PC-3 (cell line): ENCODE measurements at regions of chr13 and their contacts with region 1.

Region 1: GRCh38 chr13:73075546-73075945 is 16.7 kb downstream of the KLF5 start:
- DNase-seq: no peak
- ATAC-seq: no peak
- H3K4me3 ChIP-seq: no peak overlapping the region
- H3K27ac ChIP-seq: peak overlapping the region; percentile 21; the same call in 1 of the 2 replicates
- H3K4me1 ChIP-seq: peaks cover 29% of the 10 kb centered on the region
- H3K27me3 ChIP-seq: no peaks in the 10 kb centered on the region
- CTCF ChIP-seq: no peak

Region 2: DNA sequence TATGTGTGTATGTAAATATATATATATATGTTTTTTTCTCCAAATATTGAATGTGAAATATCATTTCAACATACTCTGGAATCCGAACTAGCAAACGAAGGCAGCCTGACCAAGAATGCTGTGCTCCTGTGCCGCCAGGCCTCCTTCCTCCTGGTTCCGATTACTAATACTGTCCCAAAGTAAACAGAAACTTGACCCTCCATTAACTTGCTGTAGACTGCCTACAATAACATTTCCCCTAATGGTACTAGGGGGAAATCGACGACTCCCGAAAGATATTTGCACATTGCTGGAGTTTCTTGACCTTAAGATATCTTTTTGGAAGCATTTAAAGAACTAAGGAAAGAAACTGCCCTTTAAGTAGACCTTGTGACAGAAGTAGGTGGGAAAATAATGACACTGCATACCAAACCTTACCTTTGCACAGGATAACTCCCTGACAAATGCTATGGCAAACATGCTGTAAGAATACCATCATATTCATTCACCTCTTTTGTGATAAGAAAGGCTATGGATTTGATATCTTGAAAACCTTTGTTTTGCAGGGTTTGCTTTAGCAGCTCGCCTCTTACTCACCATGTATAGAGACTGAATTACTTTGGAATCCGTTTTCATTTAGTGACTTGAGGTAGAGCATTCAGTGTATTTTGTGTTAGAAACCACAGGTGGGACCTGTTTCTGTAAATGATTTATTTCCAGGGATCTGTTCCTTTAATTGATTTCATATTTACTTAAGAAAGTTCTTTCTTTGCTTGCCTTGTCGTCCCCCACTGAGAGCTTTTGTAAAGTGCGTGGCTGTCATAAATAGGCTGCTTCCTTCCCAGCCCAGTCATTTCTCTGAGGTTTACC is 63.3 kb after region 1 on chr13:
- CTCF ChIA-PET with region 1: no interaction called
- POLR2A ChIA-PET with region 1: interaction called, 5 read pairs
- intact Hi-C with region 1: loop called (anchors 5 kb)
- DNase-seq: peak; percentile 83
- ATAC-seq: peak; percentile 90
- H3K4me3 ChIP-seq: peak overlapping the region; percentile 47; the same call in 1 of the 2 replicates
- H3K27ac ChIP-seq: peak overlapping the region; percentile 94
- H3K4me1 ChIP-seq: peaks cover 52% of the 10 kb centered on the region
- H3K27me3 ChIP-seq: no peaks in the 10 kb centered on the region
- CTCF ChIP-seq: no peak

Region 3: DNA sequence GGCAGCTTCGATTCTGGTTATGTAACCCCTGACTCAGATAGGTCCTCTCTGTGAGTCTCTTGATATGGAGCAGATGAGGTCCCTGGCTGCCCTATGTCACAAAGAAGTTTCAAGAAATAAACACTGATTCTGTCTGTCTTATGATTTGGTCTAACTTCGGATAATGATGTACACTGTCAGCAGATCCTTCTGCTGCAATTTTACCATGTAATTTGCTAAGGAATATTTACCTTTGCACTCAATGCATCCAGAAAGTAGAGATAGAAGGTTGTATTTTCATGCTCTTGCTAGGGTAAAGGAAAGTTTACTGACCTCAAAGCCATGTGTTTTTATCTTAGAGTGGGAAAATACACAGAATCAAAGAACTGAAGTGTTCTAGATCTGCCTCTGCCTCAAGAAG is 81.5 kb after region 1 on chr13:
- CTCF ChIA-PET with region 1: no interaction called
- POLR2A ChIA-PET with region 1: interaction called, 18 read pairs
- intact Hi-C with region 1: no loop called
- DNase-seq: no peak
- ATAC-seq: no peak
- H3K4me3 ChIP-seq: no peak overlapping the region
- H3K27ac ChIP-seq: no peak overlapping the region
- H3K4me1 ChIP-seq: no peaks in the 10 kb centered on the region
- H3K27me3 ChIP-seq: no peaks in the 10 kb centered on the region
- CTCF ChIP-seq: no peak

Region 4: DNA sequence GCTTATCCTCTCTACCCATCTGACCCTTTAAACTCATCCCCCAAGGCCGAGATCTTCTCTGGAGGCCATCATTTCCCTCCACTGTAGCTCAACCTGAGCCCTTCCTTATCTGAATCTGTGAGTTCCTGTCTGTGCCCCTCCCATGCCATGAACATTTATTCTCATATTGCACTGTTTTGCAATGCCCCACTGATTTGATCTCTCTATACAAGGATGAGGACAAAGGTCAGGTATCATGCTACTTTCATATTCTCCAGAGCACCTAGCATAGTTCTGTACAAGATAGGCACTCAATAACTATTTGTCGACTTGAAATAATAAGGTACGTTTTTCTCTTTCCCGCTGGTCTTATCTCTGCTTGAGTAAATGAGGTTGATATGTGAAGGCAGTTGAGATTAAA is 118.8 kb after region 1 on chr13:
- CTCF ChIA-PET with region 1: no interaction called
- POLR2A ChIA-PET with region 1: no interaction called
- intact Hi-C with region 1: no loop called
- DNase-seq: peak; percentile 7
- ATAC-seq: no peak; the same call in 1 of the 2 replicates
- H3K4me3 ChIP-seq: no peak overlapping the region
- H3K27ac ChIP-seq: peak overlapping the region; percentile 76
- H3K4me1 ChIP-seq: peaks cover 21% of the 10 kb centered on the region
- H3K27me3 ChIP-seq: no peaks in the 10 kb centered on the region
- CTCF ChIP-seq: no peak

Region 5: DNA sequence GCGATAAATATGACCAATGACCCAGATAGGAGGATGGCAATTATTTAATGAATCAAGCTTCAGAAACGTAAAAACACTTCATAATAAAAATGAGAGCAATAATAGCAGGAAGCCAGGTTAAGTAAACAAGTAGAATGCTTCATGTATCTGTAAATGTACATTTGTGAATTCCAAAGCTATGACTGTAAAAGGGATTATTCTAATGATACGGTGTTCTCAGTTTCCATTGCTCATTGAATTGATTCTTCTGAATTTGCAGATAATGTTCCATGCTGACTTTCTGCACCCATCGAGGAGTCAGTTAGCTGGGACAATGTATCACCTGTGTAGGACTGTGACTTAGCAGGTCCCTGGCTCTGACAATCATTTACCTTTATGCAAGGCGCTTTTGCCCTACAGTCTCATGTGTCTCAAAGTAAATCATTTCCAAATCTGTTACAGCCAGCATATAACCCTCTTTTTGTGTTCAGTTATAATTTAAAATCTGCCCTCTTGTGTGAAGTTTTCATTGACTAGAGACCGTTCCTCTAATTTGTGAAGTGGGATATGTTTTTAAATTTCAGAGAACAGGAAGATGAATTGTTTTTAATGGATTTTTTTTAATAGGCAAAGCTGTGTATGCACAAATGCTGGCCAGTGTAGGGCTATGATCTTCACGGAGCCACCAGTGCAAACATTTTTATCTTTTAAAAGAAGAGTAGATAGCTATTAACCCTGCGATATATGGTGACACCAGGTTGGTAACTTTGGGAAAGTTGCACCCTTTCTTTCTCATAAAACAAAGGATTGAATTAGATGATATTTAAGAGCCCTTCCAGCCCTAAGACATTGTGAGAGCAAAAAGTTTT is 250.4 kb after region 1 on chr13:
- CTCF ChIA-PET with region 1: no interaction called
- POLR2A ChIA-PET with region 1: no interaction called
- intact Hi-C with region 1: loop called (anchors 5 kb)
- DNase-seq: peak; percentile 81
- ATAC-seq: peak; percentile 81
- H3K4me3 ChIP-seq: peak overlapping the region; percentile 49
- H3K27ac ChIP-seq: peak overlapping the region; percentile 95
- H3K4me1 ChIP-seq: peaks cover 32% of the 10 kb centered on the region
- H3K27me3 ChIP-seq: no peaks in the 10 kb centered on the region
- CTCF ChIP-seq: no peak

Region 6: GRCh38 chr13:73440296-73440895 is 364.9 kb after region 1 on chr13:
- CTCF ChIA-PET with region 1: no interaction called
- POLR2A ChIA-PET with region 1: no interaction called
- intact Hi-C with region 1: no loop called
- DNase-seq: no peak
- ATAC-seq: no peak
- H3K4me3 ChIP-seq: no peak overlapping the region
- H3K27ac ChIP-seq: no peak overlapping the region
- H3K4me1 ChIP-seq: no peaks in the 10 kb centered on the region
- H3K27me3 ChIP-seq: no peaks in the 10 kb centered on the region
- CTCF ChIP-seq: no peak

Region 7: DNA sequence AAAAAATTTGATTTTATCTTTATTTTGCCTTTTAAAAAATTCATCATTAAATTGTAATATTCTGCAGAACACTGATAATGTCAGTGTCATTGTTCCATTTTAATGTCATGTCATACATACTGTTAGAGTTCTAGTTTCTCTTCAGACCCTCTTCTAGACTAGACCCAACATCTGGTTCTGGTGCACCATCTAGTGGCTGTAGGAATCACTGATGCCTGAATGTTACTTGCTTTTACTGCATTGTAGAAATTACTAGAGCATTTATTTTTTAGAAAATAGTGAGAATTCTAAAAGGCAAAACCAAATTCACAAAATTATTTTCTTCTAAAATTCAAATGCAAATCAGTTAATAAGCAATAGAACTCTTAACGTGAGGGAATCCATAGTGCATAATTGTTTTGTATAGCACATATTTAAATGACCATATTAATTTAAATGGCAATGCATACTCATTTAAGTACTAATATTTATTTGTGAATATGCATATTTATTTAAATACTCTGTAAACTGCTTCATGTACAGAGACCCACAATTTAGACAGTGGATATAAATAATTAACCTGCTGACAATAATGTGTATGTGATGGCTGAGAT is 632.9 kb after region 1 on chr13:
- CTCF ChIA-PET with region 1: no interaction called
- POLR2A ChIA-PET with region 1: no interaction called
- intact Hi-C with region 1: loop called (anchors 5 kb)
- DNase-seq: peak; percentile 77
- ATAC-seq: peak; percentile 81
- H3K4me3 ChIP-seq: no peak overlapping the region
- H3K27ac ChIP-seq: peak overlapping the region; percentile 54; the same call in 1 of the 2 replicates
- H3K4me1 ChIP-seq: no peaks in the 10 kb centered on the region
- H3K27me3 ChIP-seq: no peaks in the 10 kb centered on the region
- CTCF ChIP-seq: peak; percentile 89

Region 8: DNA sequence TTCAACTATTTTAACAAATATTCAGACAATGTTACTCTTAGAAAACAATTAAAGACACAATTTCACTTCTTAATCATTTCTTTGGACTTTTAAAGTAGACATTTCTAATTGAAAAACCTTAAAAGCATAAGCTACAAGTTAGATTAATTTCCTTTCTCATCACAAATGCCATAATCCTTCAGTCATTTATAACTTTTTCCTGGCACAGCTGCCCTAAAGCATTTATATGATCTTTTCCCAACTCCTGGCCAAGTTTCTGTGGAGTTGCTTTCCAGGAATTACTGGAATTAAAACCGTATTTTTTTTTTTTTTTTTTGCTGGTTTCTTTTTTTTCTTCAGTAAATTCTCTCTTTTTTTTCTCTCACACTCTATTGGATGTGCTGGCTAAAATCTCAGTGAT is 1790.6 kb after region 1 on chr13:
- CTCF ChIA-PET with region 1: no interaction called
- POLR2A ChIA-PET with region 1: interaction called, 17 read pairs
- intact Hi-C with region 1: no loop called
- DNase-seq: no peak
- ATAC-seq: no peak
- H3K4me3 ChIP-seq: no peak overlapping the region
- H3K27ac ChIP-seq: no peak overlapping the region
- H3K4me1 ChIP-seq: peaks cover 31% of the 10 kb centered on the region
- H3K27me3 ChIP-seq: no peaks in the 10 kb centered on the region
- CTCF ChIP-seq: no peak